Common myeloid progenitor, CD34-positive (primary cell): ENCODE measurements at regions of chr9 and their contacts with region 1.

Region 1: GRCh38 chr9:137223078-137223970 is 1.3 kb upstream of the RNF208 start:
- DNase-seq: peak; percentile 98 to 99 (median 99)
- H3K4me3 ChIP-seq: peak overlapping the region; percentile 48 to 93 (median 77)
- H3K27ac ChIP-seq: peak overlapping the region; percentile 54 to 83
- H3K4me1 ChIP-seq: peaks cover 2 to 32% (median 27%) of the 10 kb centered on the region in 4 experiments
- H3K27me3 ChIP-seq: peaks cover 0 to 17% (median 0%) of the 10 kb centered on the region in 5 experiments

Region 2: GRCh38 chr9:137034863-137035761 is 188.2 kb before region 1 on chr9:
- CTCF ChIA-PET with region 1: no interaction called
- POLR2A ChIA-PET with region 1: no interaction called
- DNase-seq: peak; percentile 91 to 96 (median 95)
- H3K4me3 ChIP-seq: peak overlapping the region in 5 of 7 experiments; percentile 29 to 59 (median 51)
- H3K27ac ChIP-seq: peak overlapping the region in 1 of 2 experiments; percentile 58
- H3K4me1 ChIP-seq: peaks cover 0 to 56% (median 55%) of the 10 kb centered on the region in 4 experiments
- H3K27me3 ChIP-seq: no peaks in the 10 kb centered on the region

Region 3: GRCh38 chr9:137117269-137117731 is 106.0 kb before region 1 on chr9:
- CTCF ChIA-PET with region 1: interaction called, 46 read pairs
- POLR2A ChIA-PET with region 1: interaction called, 4 read pairs
- DNase-seq: no peak
- H3K4me3 ChIP-seq: no peak overlapping the region
- H3K27ac ChIP-seq: no peak overlapping the region
- H3K4me1 ChIP-seq: peaks cover under 1 to 13% (median 12%) of the 10 kb centered on the region in 4 experiments
- H3K27me3 ChIP-seq: no peaks in the 10 kb centered on the region

Region 4: DNA sequence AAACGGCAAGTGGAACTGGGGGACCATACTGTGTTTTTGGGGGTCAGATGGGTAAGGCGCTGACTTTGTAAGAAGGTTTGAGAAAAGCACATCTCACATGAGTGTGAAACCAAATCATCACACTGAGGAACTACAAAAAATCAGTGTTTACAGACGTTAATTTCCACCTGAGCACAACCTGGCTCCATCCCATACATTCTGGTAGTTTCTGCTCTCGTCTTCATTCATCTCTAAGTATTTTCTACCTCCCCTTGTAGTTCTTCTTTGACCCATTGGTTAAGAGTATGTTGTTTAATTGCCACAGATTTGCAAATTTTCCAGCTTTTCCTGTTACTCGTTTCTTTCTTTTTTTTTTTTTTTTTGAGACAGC is 99.9 kb before region 1 on chr9:
- CTCF ChIA-PET with region 1: interaction called, 46 read pairs
- POLR2A ChIA-PET with region 1: interaction called, 4 read pairs
- DNase-seq: no peak
- H3K4me3 ChIP-seq: no peak overlapping the region
- H3K27ac ChIP-seq: no peak overlapping the region
- H3K4me1 ChIP-seq: peaks cover 12 to 24% (median 20%) of the 10 kb centered on the region in 4 experiments
- H3K27me3 ChIP-seq: no peaks in the 10 kb centered on the region

Region 5: GRCh38 chr9:137176302-137177182 is 46.8 kb before region 1 on chr9:
- CTCF ChIA-PET with region 1: interaction called, 13 read pairs
- POLR2A ChIA-PET with region 1: no interaction called
- DNase-seq: peak in 2 of 3 donors; percentile 49 to 55
- H3K4me3 ChIP-seq: no peak overlapping the region
- H3K27ac ChIP-seq: no peak overlapping the region
- H3K4me1 ChIP-seq: peaks cover 0 to 32% (median 21%) of the 10 kb centered on the region in 4 experiments
- H3K27me3 ChIP-seq: peaks cover 0 to 4% (median 0%) of the 10 kb centered on the region in 5 experiments

Region 6: GRCh38 chr9:137188490-137189296 is 34.6 kb before region 1 on chr9 and contains the starts of genes ANAPC2 and SSNA1:
- CTCF ChIA-PET with region 1: interaction called, 15 read pairs
- POLR2A ChIA-PET with region 1: interaction called, 4 read pairs
- DNase-seq: peak; percentile 92 to 97 (median 94)
- H3K4me3 ChIP-seq: peak within 1 kb of the TSS; percentile 90 to 99 (median 96)
- H3K27ac ChIP-seq: peak within 1 kb of the TSS; percentile 70 to 90
- H3K4me1 ChIP-seq: peaks cover 3 to 39% (median 36%) of the 10 kb centered on the region in 4 experiments
- H3K27me3 ChIP-seq: no peaks in the 10 kb centered on the region

Region 7: DNA sequence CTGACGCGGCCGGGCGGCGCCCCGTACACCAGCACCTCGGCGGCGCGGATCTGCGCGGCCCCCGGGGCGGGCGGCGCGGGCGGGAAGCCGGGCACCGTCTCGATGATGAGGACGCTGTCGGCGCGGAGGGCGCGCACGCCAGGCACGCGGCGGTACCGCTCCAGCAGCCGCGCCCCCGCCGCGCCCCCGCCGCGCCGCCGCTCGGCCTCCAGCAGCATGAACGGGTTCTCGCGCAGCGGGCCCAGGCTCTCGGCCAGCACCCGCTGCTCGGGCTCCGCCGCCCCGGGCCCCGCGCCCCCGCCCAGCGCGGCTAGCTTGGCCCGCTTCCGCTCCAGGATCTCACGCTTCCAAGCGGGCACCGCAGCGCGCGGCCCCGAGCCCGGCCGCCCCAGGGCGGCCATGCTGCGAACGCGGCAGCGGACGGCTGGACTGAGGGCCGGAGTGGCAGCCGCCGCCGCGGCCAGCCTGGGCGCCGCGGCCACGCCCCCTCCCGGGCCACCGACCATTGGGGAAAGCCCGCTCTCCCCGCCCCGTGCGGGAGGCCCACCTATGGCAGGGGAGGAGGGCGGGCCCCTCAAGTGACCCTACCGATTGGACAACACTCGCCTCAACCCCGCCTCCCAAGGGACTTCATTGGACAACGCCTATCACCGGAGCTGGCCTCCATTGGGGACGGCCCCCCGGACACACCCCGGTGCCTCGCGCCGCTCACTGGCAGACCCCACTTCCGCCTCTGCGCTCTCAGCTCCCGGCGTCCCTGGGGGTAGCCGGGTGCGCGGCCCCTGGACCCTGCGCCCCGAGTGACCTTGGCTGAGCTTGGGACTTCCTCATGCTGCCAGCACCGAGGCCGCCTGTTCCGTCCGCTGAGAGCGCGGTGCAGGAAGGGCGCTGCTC is 22.8 kb before region 1 on chr9 and contains the start of gene TPRN:
- CTCF ChIA-PET with region 1: interaction called, 11 read pairs
- POLR2A ChIA-PET with region 1: interaction called, 3 read pairs
- DNase-seq: peak; percentile 98 to 99 (median 99)
- H3K4me3 ChIP-seq: peak within 1 kb of the TSS; percentile 69 to 92 (median 89)
- H3K27ac ChIP-seq: peak within 1 kb of the TSS in 1 of 2 experiments; percentile 71
- H3K4me1 ChIP-seq: peaks cover 4 to 54% (median 33%) of the 10 kb centered on the region in 4 experiments
- H3K27me3 ChIP-seq: peaks cover 0 to 9% (median 0%) of the 10 kb centered on the region in 5 experiments

Region 8: GRCh38 chr9:137240861-137241489 is 17.7 kb after region 1 on chr9 and contains the start of gene TUBB4B:
- CTCF ChIA-PET with region 1: interaction called, 25 read pairs
- POLR2A ChIA-PET with region 1: interaction called, 16 read pairs
- DNase-seq: peak; percentile 100
- H3K4me3 ChIP-seq: peak within 1 kb of the TSS; percentile 56 to 87 (median 78)
- H3K27ac ChIP-seq: peak within 1 kb of the TSS; percentile 33 to 83
- H3K4me1 ChIP-seq: peaks cover 3 to 65% (median 53%) of the 10 kb centered on the region in 4 experiments
- H3K27me3 ChIP-seq: no peaks in the 10 kb centered on the region